ENCODE measurements at regions of chr2 and their contacts with region 1.

Region 1: GRCh38 chr2:96336104-96336775 is 674 bp downstream of the NCAPH start:
- DNase-seq: no peak
- ATAC-seq: no peak
- H3K4me3 Mint-ChIP-seq: peak overlapping the region; percentile 90
- H3K27ac Mint-ChIP-seq: peak overlapping the region; percentile 93
- H3K4me1 Mint-ChIP-seq: peaks cover 20% of the 10 kb centered on the region
- H3K27me3 Mint-ChIP-seq: peaks cover 3% of the 10 kb centered on the region; the same call in 1 of the 2 replicates
- CTCF ChIP-seq: no peak

Region 2: DNA sequence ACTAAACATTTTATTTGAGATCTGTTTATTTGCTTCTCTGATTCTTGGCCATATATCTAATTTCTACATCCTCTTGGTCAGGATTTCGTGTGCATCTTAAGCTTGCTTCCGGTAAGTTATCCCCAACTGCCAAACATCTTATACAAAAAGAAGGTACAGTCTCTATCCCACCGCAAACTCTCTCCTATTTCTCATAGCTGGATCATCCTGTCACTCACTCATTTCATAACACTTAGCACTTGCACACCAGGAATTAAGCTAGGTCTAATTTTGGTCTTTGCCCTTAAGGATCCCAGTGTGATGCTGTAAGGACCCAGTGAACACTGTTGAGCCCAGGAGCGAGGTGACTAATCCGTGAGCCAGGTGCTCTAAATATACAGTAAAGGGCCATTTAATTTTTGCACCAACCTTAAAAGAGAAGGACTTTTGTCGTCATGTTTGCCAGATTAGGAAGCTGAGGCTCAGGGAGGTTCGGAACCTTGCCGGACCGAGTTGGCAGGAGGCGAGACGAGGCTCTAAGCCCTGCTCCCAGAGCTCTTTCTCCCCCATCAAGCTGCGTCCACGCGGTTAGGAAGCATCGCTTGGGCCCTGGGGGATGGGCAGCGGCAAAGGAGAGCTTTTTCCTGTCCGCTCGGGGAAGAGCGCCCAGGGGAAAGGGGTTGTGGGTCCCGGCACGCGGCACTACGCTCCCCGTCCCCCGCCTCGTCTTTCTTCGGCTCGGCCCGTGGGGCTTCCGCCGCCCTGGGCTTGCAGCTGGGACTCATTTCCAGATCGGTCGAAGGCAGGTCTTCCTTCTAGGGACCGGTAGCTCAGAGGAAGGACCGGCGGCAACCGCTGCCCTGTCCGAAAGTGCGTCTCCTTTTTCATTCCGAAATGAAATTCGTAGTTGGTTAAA is 15.3 kb before region 1 on chr2:
- CTCF ChIA-PET with region 1: interaction called, 10 read pairs
- POLR2A ChIA-PET with region 1: interaction called, 8 read pairs
- DNase-seq: peak; percentile 55
- ATAC-seq: peak; percentile 43
- H3K4me3 Mint-ChIP-seq: peak overlapping the region; percentile 90
- H3K27ac Mint-ChIP-seq: no peak overlapping the region
- H3K4me1 Mint-ChIP-seq: peaks cover 23% of the 10 kb centered on the region
- H3K27me3 Mint-ChIP-seq: peaks cover 68% of the 10 kb centered on the region
- CTCF ChIP-seq: no peak

Region 3: DNA sequence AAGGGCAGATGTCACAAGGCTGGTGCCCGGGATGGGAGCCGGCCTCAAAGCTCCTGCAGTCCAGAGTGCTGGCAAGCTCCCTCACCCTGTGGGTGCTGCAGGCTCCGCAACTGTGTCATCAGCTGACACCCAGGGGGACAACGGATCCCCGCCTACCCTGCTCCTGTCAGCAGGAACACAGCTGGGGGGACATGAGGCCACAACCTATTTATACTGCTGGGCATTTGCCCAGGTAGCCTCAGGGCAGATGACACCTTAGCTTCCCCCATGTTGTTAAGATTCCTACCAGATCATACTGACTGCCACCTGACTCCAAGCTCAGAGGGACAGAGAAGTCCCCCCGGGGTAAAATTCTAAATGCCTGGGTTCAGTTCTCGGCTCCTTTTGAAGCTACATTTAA is 506.4 kb after region 1 on chr2:
- CTCF ChIA-PET with region 1: no interaction called
- POLR2A ChIA-PET with region 1: interaction called, 11 read pairs
- DNase-seq: no peak
- ATAC-seq: no peak
- H3K4me3 Mint-ChIP-seq: no peak overlapping the region
- H3K27ac Mint-ChIP-seq: no peak overlapping the region
- H3K4me1 Mint-ChIP-seq: peaks cover 5% of the 10 kb centered on the region; the same call in 1 of the 2 replicates
- H3K27me3 Mint-ChIP-seq: no peaks in the 10 kb centered on the region
- CTCF ChIP-seq: no peak